ENCODE measurements at regions of chr1 and their contacts with region 1.

Region 1: GRCh38 chr1:192808518-192809306 is at the start of gene RGS2:
- DNase-seq: peak; percentile 95
- H3K4me3 Mint-ChIP-seq: peak within 1 kb of the TSS; percentile 97
- H3K27ac Mint-ChIP-seq: peak within 1 kb of the TSS; percentile 90
- H3K4me1 Mint-ChIP-seq: peaks cover 28% of the 10 kb centered on the region
- H3K27me3 Mint-ChIP-seq: no peaks in the 10 kb centered on the region
- CTCF ChIP-seq: no peak
- total RNA-seq, gene RGS2: 31.5 and 42.6 TPM in 2 replicates

Region 2: GRCh38 chr1:192660613-192661012 is 148.1 kb before region 1 on chr1:
- CTCF ChIA-PET with region 1: no interaction called
- POLR2A ChIA-PET with region 1: no interaction called
- intact Hi-C with region 1: no loop called
- DNase-seq: no peak
- H3K4me3 Mint-ChIP-seq: no peak overlapping the region
- H3K27ac Mint-ChIP-seq: no peak overlapping the region
- H3K4me1 Mint-ChIP-seq: no peaks in the 10 kb centered on the region
- H3K27me3 Mint-ChIP-seq: no peaks in the 10 kb centered on the region
- CTCF ChIP-seq: no peak

Region 3: GRCh38 chr1:192713921-192714320 is 94.8 kb before region 1 on chr1:
- CTCF ChIA-PET with region 1: no interaction called
- POLR2A ChIA-PET with region 1: no interaction called
- intact Hi-C with region 1: no loop called
- DNase-seq: no peak
- H3K4me3 Mint-ChIP-seq: no peak overlapping the region
- H3K27ac Mint-ChIP-seq: no peak overlapping the region
- H3K4me1 Mint-ChIP-seq: no peaks in the 10 kb centered on the region
- H3K27me3 Mint-ChIP-seq: no peaks in the 10 kb centered on the region
- CTCF ChIP-seq: no peak

Region 4: GRCh38 chr1:192793983-192794767 is 14.5 kb before region 1 on chr1:
- CTCF ChIA-PET with region 1: interaction called, 17 read pairs
- POLR2A ChIA-PET with region 1: interaction called, 6 read pairs
- intact Hi-C with region 1: no loop called
- DNase-seq: no peak
- H3K4me3 Mint-ChIP-seq: no peak overlapping the region
- H3K27ac Mint-ChIP-seq: no peak overlapping the region
- H3K4me1 Mint-ChIP-seq: no peaks in the 10 kb centered on the region
- H3K27me3 Mint-ChIP-seq: no peaks in the 10 kb centered on the region
- CTCF ChIP-seq: no peak

Region 5: DNA sequence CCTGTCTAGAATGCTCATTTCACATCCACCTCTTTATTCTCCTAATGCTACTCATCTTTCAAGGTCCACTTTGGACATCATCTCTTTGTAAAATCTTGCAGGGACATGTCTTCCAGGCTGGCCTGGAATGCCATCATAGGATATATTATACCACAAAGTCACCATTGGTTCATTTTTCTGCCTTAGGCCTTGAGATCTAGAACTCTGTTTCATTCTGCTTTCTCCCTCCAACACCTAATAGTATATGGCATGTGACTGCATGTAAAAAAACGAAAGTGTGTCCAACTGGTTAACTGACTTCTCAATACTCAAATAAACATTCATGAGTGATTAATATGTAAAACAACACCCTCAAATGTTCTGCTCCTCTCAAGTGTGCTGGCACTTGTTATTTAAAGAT is 84.2 kb after region 1 on chr1:
- CTCF ChIA-PET with region 1: interaction called, 10 read pairs
- POLR2A ChIA-PET with region 1: interaction called, 5 read pairs
- intact Hi-C with region 1: no loop called
- DNase-seq: peak; percentile 13
- H3K4me3 Mint-ChIP-seq: no peak overlapping the region
- H3K27ac Mint-ChIP-seq: peak overlapping the region; percentile 63
- H3K4me1 Mint-ChIP-seq: peaks cover 14% of the 10 kb centered on the region
- H3K27me3 Mint-ChIP-seq: no peaks in the 10 kb centered on the region
- CTCF ChIP-seq: no peak

Region 6: GRCh38 chr1:192974701-192975100 is 166.0 kb after region 1 on chr1:
- CTCF ChIA-PET with region 1: interaction called, 12 read pairs
- POLR2A ChIA-PET with region 1: interaction called, 17 read pairs
- intact Hi-C with region 1: no loop called
- DNase-seq: peak; percentile 57
- H3K4me3 Mint-ChIP-seq: no peak overlapping the region
- H3K27ac Mint-ChIP-seq: no peak overlapping the region
- H3K4me1 Mint-ChIP-seq: peaks cover 14% of the 10 kb centered on the region
- H3K27me3 Mint-ChIP-seq: no peaks in the 10 kb centered on the region
- CTCF ChIP-seq: no peak

Region 7: DNA sequence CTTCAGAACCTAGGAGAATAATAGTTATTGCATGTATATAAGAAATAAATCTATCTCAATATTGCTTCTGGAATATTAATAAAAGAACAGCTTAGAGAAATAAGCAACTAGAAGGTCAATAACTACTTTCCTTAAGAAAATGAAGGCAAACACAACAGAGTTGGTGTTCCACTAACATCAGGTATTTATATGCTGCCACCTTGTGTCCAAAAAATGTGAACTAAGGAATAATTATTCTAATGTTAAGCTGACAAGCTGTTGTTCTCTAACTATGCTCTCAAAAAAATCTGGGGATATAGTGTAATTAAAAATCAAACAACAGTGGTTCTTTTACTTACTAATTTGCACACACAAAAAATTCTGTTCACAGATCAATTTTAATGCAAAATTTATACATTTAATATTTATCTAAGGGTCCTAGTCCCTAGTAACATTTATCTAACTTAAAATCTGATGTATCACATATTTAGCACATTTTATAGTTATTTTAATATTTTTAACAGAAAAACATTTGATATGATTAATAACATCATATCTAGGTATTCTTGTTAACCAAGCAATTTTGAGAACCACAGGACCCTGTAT is 210.8 kb after region 1 on chr1:
- CTCF ChIA-PET with region 1: interaction called, 226 read pairs
- POLR2A ChIA-PET with region 1: interaction called, 204 read pairs
- intact Hi-C with region 1: loop called (anchors 1 kb)
- DNase-seq: peak; percentile 76
- H3K4me3 Mint-ChIP-seq: no peak overlapping the region
- H3K27ac Mint-ChIP-seq: peak overlapping the region; percentile 31
- H3K4me1 Mint-ChIP-seq: no peaks in the 10 kb centered on the region
- H3K27me3 Mint-ChIP-seq: no peaks in the 10 kb centered on the region
- CTCF ChIP-seq: peak; percentile 59

Region 8: GRCh38 chr1:193121616-193122593 is 313.2 kb after region 1 on chr1 and contains the start of gene CDC73:
- CTCF ChIA-PET with region 1: no interaction called
- POLR2A ChIA-PET with region 1: interaction called, 6 read pairs
- intact Hi-C with region 1: loop called (anchors 1 kb)
- DNase-seq: peak; percentile 99
- H3K4me3 Mint-ChIP-seq: peak within 1 kb of the TSS; percentile 91
- H3K27ac Mint-ChIP-seq: peak within 1 kb of the TSS; percentile 88
- H3K4me1 Mint-ChIP-seq: peaks cover 20% of the 10 kb centered on the region
- H3K27me3 Mint-ChIP-seq: no peaks in the 10 kb centered on the region
- CTCF ChIP-seq: peak; percentile 99
- total RNA-seq, gene CDC73: 79.8 and 85.8 TPM in 2 replicates